ENCODE measurements at regions of chr19 and their contacts with region 1.

Region 1: GRCh38 chr19:53511933-53512374 is 26.0 kb upstream of the ZNF331 start:
- DNase-seq: peak; percentile 28
- ATAC-seq: peak; percentile 84
- H3K4me3 Mint-ChIP-seq: no peak overlapping the region
- H3K27ac Mint-ChIP-seq: no peak overlapping the region
- H3K4me1 Mint-ChIP-seq: peaks cover 2% of the 10 kb centered on the region
- H3K27me3 Mint-ChIP-seq: peaks cover 7% of the 10 kb centered on the region
- CTCF ChIP-seq: no peak

Region 2: GRCh38 chr19:53424968-53425597 is 86.9 kb before region 1 on chr19:
- CTCF ChIA-PET with region 1: interaction called, 9 read pairs
- POLR2A ChIA-PET with region 1: no interaction called
- intact Hi-C with region 1: loop called (anchors 1 kb)
- DNase-seq: peak; percentile 31
- ATAC-seq: peak; percentile 90
- H3K4me3 Mint-ChIP-seq: no peak overlapping the region
- H3K27ac Mint-ChIP-seq: no peak overlapping the region
- H3K4me1 Mint-ChIP-seq: peaks cover 3% of the 10 kb centered on the region
- H3K27me3 Mint-ChIP-seq: no peaks in the 10 kb centered on the region
- CTCF ChIP-seq: no peak

Region 3: GRCh38 chr19:53498581-53498980 is 13.4 kb before region 1 on chr19:
- CTCF ChIA-PET with region 1: no interaction called
- POLR2A ChIA-PET with region 1: no interaction called
- intact Hi-C with region 1: no loop called
- DNase-seq: no peak
- ATAC-seq: no peak
- H3K4me3 Mint-ChIP-seq: no peak overlapping the region
- H3K27ac Mint-ChIP-seq: no peak overlapping the region
- H3K4me1 Mint-ChIP-seq: no peaks in the 10 kb centered on the region
- H3K27me3 Mint-ChIP-seq: peaks cover 5% of the 10 kb centered on the region
- CTCF ChIP-seq: no peak

Measured in activated B cell treated with CpG ODN at 0.5 μM for 24 hours (primary cell).